Spleen (tissue), 13 donors: ENCODE measurements at regions of chr11 and their contacts with region 1.

Region 1: DNA sequence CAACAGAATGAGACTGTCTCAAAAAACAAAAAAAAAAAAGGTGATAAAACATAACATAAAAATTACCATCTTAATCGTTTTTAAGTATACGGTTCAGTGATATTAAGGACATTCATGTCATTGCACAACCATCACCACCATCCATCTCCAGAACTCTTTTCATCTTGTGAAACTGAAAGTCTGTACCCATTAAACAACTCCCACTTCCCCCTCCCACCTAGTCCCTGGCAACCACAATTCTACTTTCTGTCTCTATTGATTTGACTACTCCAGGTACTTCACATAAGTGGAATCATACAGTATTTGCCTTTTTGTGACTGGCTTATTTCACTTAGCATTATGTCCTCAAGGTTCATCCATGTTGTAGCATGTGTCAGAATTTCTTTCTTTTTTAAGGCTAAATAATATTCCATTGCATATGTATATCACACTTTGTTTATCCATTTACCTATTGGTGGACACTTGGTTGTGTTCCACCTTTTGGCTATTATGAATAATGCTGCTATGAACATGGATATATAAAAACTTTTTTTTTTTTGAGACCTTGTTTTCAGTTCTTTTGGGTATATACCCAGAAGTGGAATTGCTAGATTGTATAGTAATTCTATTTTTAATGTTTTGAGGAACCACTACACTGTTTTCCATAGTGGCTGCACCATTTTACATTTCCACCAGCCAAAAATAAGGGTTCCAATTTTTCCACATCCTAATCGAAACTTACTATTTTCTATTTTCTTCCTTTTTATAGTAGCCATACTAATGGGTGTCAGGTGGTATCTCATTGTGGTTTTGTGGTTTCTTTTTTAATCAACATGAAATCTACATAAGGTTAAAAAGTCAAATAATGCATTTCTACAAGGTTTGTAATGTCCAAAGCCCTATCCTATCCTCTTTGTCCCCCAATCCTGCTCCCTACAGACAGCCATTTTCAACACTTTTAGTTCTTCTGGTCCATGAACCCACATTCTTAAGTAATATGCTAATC is 23.4 kb upstream of the PIK3C2A start:
- DNase-seq: no peak
- H3K4me3 ChIP-seq: no peak overlapping the region
- H3K27ac ChIP-seq: no peak overlapping the region
- H3K4me1 ChIP-seq: peaks cover 0 to 22% (median 17%) of the 10 kb centered on the region in 6 donors
- H3K27me3 ChIP-seq: no peaks in the 10 kb centered on the region
- CTCF ChIP-seq: no peak
- POLR2A ChIP-seq: no peak

Region 2: GRCh38 chr11:17354601-17354991 is 123.4 kb after region 1 on chr11:
- intact Hi-C with region 1: loop called (anchors 10 kb)
- DNase-seq: no peak
- H3K4me3 ChIP-seq: no peak overlapping the region
- H3K27ac ChIP-seq: no peak overlapping the region
- H3K4me1 ChIP-seq: peaks cover 13 to 39% (median 31%) of the 10 kb centered on the region in 6 donors
- H3K27me3 ChIP-seq: peaks cover 0 to 30% (median 0%) of the 10 kb centered on the region in 7 donors
- CTCF ChIP-seq: peak; percentile 50 to 79 (median 68)
- POLR2A ChIP-seq: no peak